GM12878 (cell line): ENCODE measurements at regions of chr4 and their contacts with region 1.

Region 1: DNA sequence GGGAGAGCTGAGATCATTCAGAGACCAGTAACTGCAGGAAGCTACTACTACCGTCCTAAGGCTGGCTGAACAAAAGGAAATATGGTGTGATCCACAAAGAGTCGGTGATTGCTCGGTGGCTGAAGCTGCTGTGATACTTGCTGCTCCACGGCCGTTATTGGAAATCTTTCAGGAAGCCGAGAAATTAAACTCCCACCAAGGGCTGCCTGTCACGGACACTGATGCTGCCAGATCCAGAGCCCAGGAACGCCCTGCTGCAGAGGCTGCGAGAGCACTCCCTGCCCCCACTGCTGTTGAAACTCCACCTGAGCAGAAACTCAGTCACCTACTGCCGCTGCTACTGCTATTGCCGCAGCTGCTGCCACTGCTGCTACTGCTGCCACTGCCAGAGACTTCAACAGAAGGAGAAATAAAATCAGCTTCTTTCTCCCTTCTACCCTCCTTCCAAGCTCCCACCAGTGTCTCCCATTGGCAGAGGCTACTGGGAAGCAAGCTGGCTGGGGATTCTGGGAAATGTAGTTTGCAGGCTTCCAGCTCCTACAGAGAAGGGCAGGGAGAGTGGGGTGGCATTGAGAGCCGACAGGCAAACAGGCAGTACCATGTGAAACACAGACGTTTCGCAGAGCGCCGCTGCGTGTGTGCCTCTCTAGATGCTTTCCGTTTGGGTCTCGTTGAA is 126.0 kb upstream of the ENPP6 start:
- DNase-seq: peak; percentile 69
- ATAC-seq: peak; percentile 51
- H3K4me3 ChIP-seq: peak overlapping the region; percentile 55
- H3K27ac ChIP-seq: peak overlapping the region; percentile 86
- H3K4me1 ChIP-seq: peaks cover 52% of the 10 kb centered on the region
- H3K27me3 ChIP-seq: no peaks in the 10 kb centered on the region
- CTCF ChIP-seq: no peak
- EP300 ChIP-seq: peak in 1 of 2 experiments; percentile 14; a peak in 1 of 4 replicates
- POLR2A ChIP-seq: peak; percentile 72
- RAD21 ChIP-seq: no peak

Region 2: GRCh38 chr4:184007891-184008290 is 335.7 kb before region 1 on chr4:
- CTCF ChIA-PET with region 1: no interaction called
- POLR2A ChIA-PET with region 1: no interaction called
- RAD21 ChIA-PET with region 1: no interaction called
- SMC1A ChIA-PET with region 1: no interaction called
- in situ Hi-C with region 1: no loop called
- intact Hi-C with region 1: no loop called
- DNase-seq: no peak
- ATAC-seq: no peak
- H3K4me3 ChIP-seq: no peak overlapping the region
- H3K27ac ChIP-seq: no peak overlapping the region
- H3K4me1 ChIP-seq: no peaks in the 10 kb centered on the region
- H3K27me3 ChIP-seq: no peaks in the 10 kb centered on the region; a peak in 1 of 4 replicates
- CTCF ChIP-seq: no peak
- EP300 ChIP-seq: no peak
- POLR2A ChIP-seq: no peak
- RAD21 ChIP-seq: no peak

Region 3: DNA sequence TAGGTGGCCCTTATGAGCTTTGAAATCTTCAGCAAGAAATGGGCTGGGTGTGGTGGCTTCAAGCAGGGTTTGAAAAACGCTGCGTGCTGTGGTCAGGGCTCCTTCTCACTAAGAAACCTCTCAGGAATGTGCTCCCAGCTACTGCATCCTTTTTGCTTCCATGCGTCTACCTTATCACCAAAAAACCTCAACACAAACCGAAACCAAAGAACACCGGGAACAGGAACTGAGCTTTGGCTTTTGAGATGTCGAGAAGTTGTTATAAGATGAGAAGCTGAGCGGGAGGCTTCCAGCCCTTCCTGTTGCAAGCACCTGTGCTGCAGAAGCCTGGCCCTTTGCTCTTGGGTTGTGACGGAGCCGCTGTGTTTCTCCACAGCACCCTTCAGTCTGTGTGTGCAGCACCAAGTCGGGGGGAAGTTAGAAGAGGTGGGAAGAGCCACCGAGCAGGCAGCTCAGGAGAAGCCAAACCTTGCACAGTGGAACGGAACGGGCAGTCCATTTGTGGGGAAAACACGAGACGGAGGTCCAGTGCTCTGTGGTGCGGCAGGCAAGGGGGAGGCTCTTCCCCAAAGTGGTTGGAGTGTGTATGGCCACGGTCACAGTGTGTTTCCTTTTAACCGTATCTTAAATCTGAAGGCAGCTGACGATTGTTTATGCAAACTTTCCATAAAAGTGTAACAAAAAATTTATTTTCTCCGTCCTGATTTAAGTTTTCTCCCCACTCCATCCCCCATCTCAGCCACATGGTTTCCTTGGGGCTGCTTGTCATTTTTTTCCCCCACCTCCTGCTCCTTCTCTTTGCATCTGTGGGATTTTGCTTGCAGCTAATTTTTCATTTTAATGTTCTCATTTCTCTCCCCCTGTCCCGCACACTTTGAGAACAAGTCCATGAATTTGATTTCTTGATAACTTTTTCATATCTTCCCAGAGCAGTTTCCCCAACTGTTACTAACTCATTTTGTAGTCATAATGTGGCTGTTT is 315.0 kb before region 1 on chr4:
- CTCF ChIA-PET with region 1: no interaction called
- POLR2A ChIA-PET with region 1: no interaction called
- RAD21 ChIA-PET with region 1: no interaction called
- SMC1A ChIA-PET with region 1: no interaction called
- in situ Hi-C with region 1: no loop called
- intact Hi-C with region 1: no loop called
- DNase-seq: no peak
- ATAC-seq: no peak; the same call in 2 of the 3 replicates
- H3K4me3 ChIP-seq: no peak overlapping the region
- H3K27ac ChIP-seq: no peak overlapping the region
- H3K4me1 ChIP-seq: no peaks in the 10 kb centered on the region
- H3K27me3 ChIP-seq: peaks cover 0 to 2% of the 10 kb centered on the region in 2 experiments; a peak in 2 of 4 replicates
- CTCF ChIP-seq: no peak
- EP300 ChIP-seq: no peak
- POLR2A ChIP-seq: no peak
- RAD21 ChIP-seq: no peak

Region 4: DNA sequence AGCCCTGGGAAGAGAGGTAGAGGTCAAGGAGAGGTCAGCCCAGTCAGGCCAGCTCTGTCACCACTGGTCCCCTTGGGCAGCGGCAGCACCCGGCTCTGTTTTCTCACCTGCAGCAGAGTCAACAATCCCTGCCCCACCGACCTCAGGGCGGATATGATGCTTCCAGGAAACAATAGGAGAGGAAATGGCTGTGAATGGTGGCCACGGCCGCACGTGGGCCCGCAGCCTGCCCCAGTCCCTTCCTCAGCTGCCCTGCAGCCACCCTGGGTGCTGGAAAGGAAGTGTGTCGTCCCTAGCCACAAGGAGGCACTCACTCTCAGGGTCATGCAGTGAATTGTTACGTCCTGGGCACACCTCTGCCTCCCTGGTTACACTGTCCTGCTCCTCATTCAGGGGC is 33.5 kb before region 1 on chr4:
- CTCF ChIA-PET with region 1: interaction called, 105 read pairs
- POLR2A ChIA-PET with region 1: interaction called, 213 read pairs
- RAD21 ChIA-PET with region 1: interaction called, 323 read pairs
- SMC1A ChIA-PET with region 1: interaction called, 270 read pairs
- in situ Hi-C with region 1: no loop called
- intact Hi-C with region 1: loop called (anchors 1 kb)
- DNase-seq: no peak
- ATAC-seq: peak; percentile 61
- H3K4me3 ChIP-seq: peak overlapping the region; percentile 75; the same call in 1 of the 2 replicates
- H3K27ac ChIP-seq: peak overlapping the region; percentile 94
- H3K4me1 ChIP-seq: peaks cover 47% of the 10 kb centered on the region
- H3K27me3 ChIP-seq: no peaks in the 10 kb centered on the region
- CTCF ChIP-seq: peak; percentile 49 to 59 (median 49)
- EP300 ChIP-seq: no peak
- POLR2A ChIP-seq: peak; percentile 33; the same call in 1 of the 2 replicates
- RAD21 ChIP-seq: peak; percentile 65

Region 5: GRCh38 chr4:184329659-184330400 is 13.8 kb before region 1 on chr4:
- CTCF ChIA-PET with region 1: interaction called, 166 read pairs
- POLR2A ChIA-PET with region 1: interaction called, 445 read pairs
- RAD21 ChIA-PET with region 1: interaction called, 419 read pairs
- SMC1A ChIA-PET with region 1: interaction called, 411 read pairs
- in situ Hi-C with region 1: no loop called
- intact Hi-C with region 1: loop called (anchors 1 kb)
- DNase-seq: peak; percentile 90
- ATAC-seq: peak; percentile 81
- H3K4me3 ChIP-seq: no peak overlapping the region
- H3K27ac ChIP-seq: peak overlapping the region; percentile 90
- H3K4me1 ChIP-seq: peaks cover 44% of the 10 kb centered on the region
- H3K27me3 ChIP-seq: no peaks in the 10 kb centered on the region
- CTCF ChIP-seq: no peak; a peak in 2 of 6 replicates
- EP300 ChIP-seq: peak; percentile 98 to 100
- POLR2A ChIP-seq: peak; percentile 53; the same call in 1 of the 2 replicates
- RAD21 ChIP-seq: peak; percentile 28; the same call in 1 of the 2 replicates

Region 6: GRCh38 chr4:184384056-184384809 is 40.6 kb after region 1 on chr4:
- CTCF ChIA-PET with region 1: interaction called, 4 read pairs
- POLR2A ChIA-PET with region 1: interaction called, 114 read pairs
- RAD21 ChIA-PET with region 1: interaction called, 69 read pairs
- SMC1A ChIA-PET with region 1: interaction called, 184 read pairs
- in situ Hi-C with region 1: no loop called
- intact Hi-C with region 1: no loop called
- DNase-seq: peak; percentile 92
- ATAC-seq: peak; percentile 77
- H3K4me3 ChIP-seq: peak overlapping the region; percentile 59; the same call in 1 of the 2 replicates
- H3K27ac ChIP-seq: peak overlapping the region; percentile 88
- H3K4me1 ChIP-seq: peaks cover 68% of the 10 kb centered on the region
- H3K27me3 ChIP-seq: no peaks in the 10 kb centered on the region
- CTCF ChIP-seq: no peak
- EP300 ChIP-seq: peak; percentile 76 to 86
- POLR2A ChIP-seq: peak; percentile 70
- RAD21 ChIP-seq: no peak

Region 7: DNA sequence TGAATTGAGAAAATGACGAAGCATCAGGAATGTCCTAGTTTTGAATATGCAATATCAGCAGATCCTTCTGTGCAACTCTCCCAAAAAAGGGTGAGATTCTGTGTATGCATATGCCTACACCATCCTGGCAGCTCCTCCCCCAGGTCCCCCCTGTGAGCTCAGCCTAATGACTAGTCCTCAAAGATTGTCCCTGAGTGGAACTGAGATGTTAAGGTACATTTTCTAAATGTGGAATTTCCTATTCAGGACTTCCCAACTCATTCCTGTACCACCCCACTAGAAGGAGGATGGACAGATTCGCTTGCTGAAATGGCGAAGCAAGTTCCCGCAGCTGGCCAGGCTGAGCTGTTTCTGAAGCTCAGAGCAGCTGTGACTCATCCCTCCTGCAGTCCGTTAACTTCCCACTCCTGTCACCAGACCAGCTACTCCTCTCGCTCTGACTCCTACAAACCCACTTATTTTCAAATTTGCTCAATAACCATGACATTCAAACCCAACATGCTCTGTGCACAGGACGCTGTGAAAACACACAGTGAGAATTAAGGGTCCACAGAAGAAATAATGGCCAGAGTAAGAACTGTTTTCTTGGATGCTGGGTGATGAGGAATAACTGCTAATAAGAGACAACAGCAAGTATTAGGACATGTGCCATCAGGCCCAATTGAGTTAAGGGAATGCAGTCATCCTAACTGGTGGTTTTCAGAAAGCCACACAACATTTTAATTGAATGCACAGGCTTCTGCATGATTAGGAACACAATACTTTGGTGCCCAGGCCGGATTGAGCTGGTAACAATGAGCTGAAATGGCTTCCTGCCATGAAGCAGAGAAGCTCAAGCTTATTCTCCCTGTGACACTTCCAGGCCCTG is 170.7 kb after region 1 on chr4:
- CTCF ChIA-PET with region 1: no interaction called
- POLR2A ChIA-PET with region 1: interaction called, 7 read pairs
- RAD21 ChIA-PET with region 1: interaction called, 38 read pairs
- SMC1A ChIA-PET with region 1: interaction called, 13 read pairs
- in situ Hi-C with region 1: no loop called
- intact Hi-C with region 1: no loop called
- DNase-seq: peak; percentile 94
- ATAC-seq: peak; percentile 96
- H3K4me3 ChIP-seq: peak overlapping the region; percentile 42
- H3K27ac ChIP-seq: peak overlapping the region; percentile 70
- H3K4me1 ChIP-seq: peaks cover 32% of the 10 kb centered on the region
- H3K27me3 ChIP-seq: no peaks in the 10 kb centered on the region
- CTCF ChIP-seq: no peak
- EP300 ChIP-seq: peak; percentile 99 to 100
- POLR2A ChIP-seq: 0 out of 2 replicates have a peak, but pooled peaks have one; percentile 30
- RAD21 ChIP-seq: no peak